Ovary (tissue), 10 donors: ENCODE measurements at regions of chr16 and their contacts with region 1.

Region 1: GRCh38 chr16:79589601-79590102 is 10.9 kb downstream of the MAF start:
- DNase-seq: peak in 4 of 5 donors; percentile 45 to 69 (median 54)
- H3K4me3 ChIP-seq: peak overlapping the region; percentile 61
- H3K27ac ChIP-seq: peak overlapping the region; percentile 26 to 82
- H3K4me1 ChIP-seq: peaks cover 8% of the 10 kb centered on the region
- H3K27me3 ChIP-seq: no peaks in the 10 kb centered on the region
- CTCF ChIP-seq: no peak
- EP300 ChIP-seq: no peak
- POLR2A ChIP-seq: no peak

Region 2: DNA sequence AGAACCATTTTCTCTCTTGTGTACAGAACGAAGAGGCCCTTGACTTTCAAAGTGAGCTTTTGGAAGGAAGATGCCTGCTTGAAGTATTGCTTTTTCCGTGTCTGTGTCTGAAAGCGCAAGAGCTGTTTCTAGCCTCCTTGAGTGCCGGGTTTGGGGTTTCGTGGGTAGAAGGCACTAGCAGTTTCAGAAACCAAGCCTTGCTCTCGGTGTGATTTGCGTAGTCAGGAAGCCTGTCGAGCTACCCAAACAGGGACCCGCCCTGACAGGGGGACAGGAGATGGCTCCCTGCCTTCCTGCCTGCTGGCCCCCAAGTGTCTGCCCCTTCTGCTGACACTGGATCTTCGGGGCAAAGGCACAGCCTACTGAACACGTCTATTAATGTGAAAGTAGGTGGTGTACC is 311.1 kb before region 1 on chr16:
- intact Hi-C with region 1: no loop called
- DNase-seq: no peak
- H3K4me3 ChIP-seq: no peak overlapping the region
- H3K27ac ChIP-seq: no peak overlapping the region
- H3K4me1 ChIP-seq: peaks cover 6% of the 10 kb centered on the region
- H3K27me3 ChIP-seq: no peaks in the 10 kb centered on the region
- CTCF ChIP-seq: no peak
- EP300 ChIP-seq: no peak
- POLR2A ChIP-seq: no peak

Region 3: GRCh38 chr16:79429381-79430190 is 160.1 kb before region 1 on chr16:
- intact Hi-C with region 1: loop called in 1 of 4 experiments (anchors 10 kb)
- DNase-seq: peak in 3 of 5 donors; percentile 29 to 37 (median 32)
- H3K4me3 ChIP-seq: no peak overlapping the region
- H3K27ac ChIP-seq: no peak overlapping the region
- H3K4me1 ChIP-seq: no peaks in the 10 kb centered on the region
- H3K27me3 ChIP-seq: no peaks in the 10 kb centered on the region
- CTCF ChIP-seq: no peak
- EP300 ChIP-seq: no peak
- POLR2A ChIP-seq: no peak

Region 4: GRCh38 chr16:79528338-79528737 is 61.3 kb before region 1 on chr16:
- intact Hi-C with region 1: loop called in 1 of 4 experiments (anchors 10 kb)
- DNase-seq: peak in 2 of 5 donors; percentile 39 to 54
- H3K4me3 ChIP-seq: no peak overlapping the region
- H3K27ac ChIP-seq: peak overlapping the region in 1 of 2 donors; percentile 21
- H3K4me1 ChIP-seq: peaks cover 11% of the 10 kb centered on the region
- H3K27me3 ChIP-seq: no peaks in the 10 kb centered on the region
- CTCF ChIP-seq: no peak
- EP300 ChIP-seq: no peak
- POLR2A ChIP-seq: no peak